GM18951 (cell line): ENCODE measurements at regions of chr7 and their contacts with region 1.

Region 1: DNA sequence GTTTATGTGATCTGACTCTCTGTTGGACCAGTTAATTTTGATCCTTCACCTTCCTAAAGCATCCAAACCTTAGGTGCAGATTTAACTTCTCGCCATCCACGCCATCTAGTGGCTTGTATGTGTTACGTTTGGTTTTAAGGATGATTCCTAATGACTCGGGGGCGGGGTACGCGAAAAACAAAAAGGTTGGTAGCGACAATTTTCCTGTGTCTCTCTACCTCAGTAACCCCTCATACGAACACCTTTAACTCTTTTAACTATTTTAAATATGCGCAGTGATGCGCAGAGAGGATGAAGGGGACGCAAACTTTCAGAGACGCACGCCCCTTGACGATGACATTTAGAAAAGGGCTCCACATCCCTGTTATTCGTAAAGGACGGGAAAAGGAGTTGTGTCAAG is 714 bp upstream of the KCND2 start:
- POLR2A ChIP-seq: no peak

Region 2: GRCh38 chr7:119935418-119936025 is 336.7 kb before region 1 on chr7:
- in situ Hi-C with region 1: loop called (anchors 25 kb)
- POLR2A ChIP-seq: no peak